B cell (primary cell): ENCODE measurements at regions of chr3 and their contacts with region 1.

Region 1: DNA sequence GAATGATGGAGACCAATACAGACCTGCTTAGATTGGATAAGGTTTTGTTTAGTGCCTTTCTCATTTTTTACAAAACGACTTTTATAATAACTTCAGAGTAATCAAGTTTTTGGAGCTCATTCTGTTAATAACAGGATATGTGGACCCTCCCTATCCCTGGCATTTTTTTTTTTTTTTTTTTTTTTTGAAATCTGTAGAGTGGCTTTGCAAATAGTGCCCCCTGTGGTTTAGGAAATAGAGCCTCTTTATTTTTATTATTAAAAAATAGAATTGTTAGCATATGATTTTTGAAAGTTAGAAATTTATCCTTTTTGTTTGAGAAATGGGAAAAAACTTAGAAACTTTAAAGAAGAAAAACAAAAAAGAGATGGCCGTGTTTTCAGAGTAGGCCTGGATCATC is 11.4 kb downstream of the SKIL start:
- DNase-seq: no peak
- ATAC-seq: no peak
- H3K4me3 ChIP-seq: no peak overlapping the region
- H3K4me3 Mint-ChIP-seq: peak overlapping the region; percentile 44
- H3K27ac ChIP-seq: no peak overlapping the region
- H3K27ac Mint-ChIP-seq: no peak overlapping the region
- H3K4me1 ChIP-seq: peaks cover 42 to 55% of the 10 kb centered on the region in 2 donors
- H3K4me1 Mint-ChIP-seq: peaks cover 63% of the 10 kb centered on the region
- H3K27me3 ChIP-seq: no peaks in the 10 kb centered on the region
- H3K27me3 Mint-ChIP-seq: no peaks in the 10 kb centered on the region
- CTCF ChIP-seq: peak; percentile 44

Region 2: GRCh38 chr3:170330366-170330765 is 38.6 kb before region 1 on chr3:
- CTCF ChIA-PET with region 1: no interaction called
- POLR2A ChIA-PET with region 1: interaction called, 10 read pairs
- intact Hi-C with region 1: no loop called
- DNase-seq: no peak
- ATAC-seq: no peak
- H3K4me3 ChIP-seq: no peak overlapping the region
- H3K4me3 Mint-ChIP-seq: no peak overlapping the region
- H3K27ac ChIP-seq: no peak overlapping the region
- H3K27ac Mint-ChIP-seq: no peak overlapping the region
- H3K4me1 ChIP-seq: peaks cover 13% of the 10 kb centered on the region in 2 donors
- H3K4me1 Mint-ChIP-seq: peaks cover 24% of the 10 kb centered on the region
- H3K27me3 ChIP-seq: no peaks in the 10 kb centered on the region
- H3K27me3 Mint-ChIP-seq: no peaks in the 10 kb centered on the region
- CTCF ChIP-seq: no peak

Region 3: GRCh38 chr3:170350515-170351413 is 18.2 kb before region 1 on chr3:
- CTCF ChIA-PET with region 1: interaction called, 4 read pairs
- POLR2A ChIA-PET with region 1: interaction called, 5 read pairs
- intact Hi-C with region 1: loop called (anchors 2 kb)
- DNase-seq: peak; percentile 49
- ATAC-seq: peak; percentile 37
- H3K4me3 ChIP-seq: peak overlapping the region in 3 of 5 experiments; percentile 25 to 42 (median 27)
- H3K4me3 Mint-ChIP-seq: peak overlapping the region; percentile 78
- H3K27ac ChIP-seq: peak overlapping the region; percentile 50 to 83
- H3K27ac Mint-ChIP-seq: peak overlapping the region; percentile 88
- H3K4me1 ChIP-seq: peaks cover 68 to 76% of the 10 kb centered on the region in 2 donors
- H3K4me1 Mint-ChIP-seq: peaks cover 75% of the 10 kb centered on the region
- H3K27me3 ChIP-seq: no peaks in the 10 kb centered on the region
- H3K27me3 Mint-ChIP-seq: no peaks in the 10 kb centered on the region
- CTCF ChIP-seq: no peak

Region 4: DNA sequence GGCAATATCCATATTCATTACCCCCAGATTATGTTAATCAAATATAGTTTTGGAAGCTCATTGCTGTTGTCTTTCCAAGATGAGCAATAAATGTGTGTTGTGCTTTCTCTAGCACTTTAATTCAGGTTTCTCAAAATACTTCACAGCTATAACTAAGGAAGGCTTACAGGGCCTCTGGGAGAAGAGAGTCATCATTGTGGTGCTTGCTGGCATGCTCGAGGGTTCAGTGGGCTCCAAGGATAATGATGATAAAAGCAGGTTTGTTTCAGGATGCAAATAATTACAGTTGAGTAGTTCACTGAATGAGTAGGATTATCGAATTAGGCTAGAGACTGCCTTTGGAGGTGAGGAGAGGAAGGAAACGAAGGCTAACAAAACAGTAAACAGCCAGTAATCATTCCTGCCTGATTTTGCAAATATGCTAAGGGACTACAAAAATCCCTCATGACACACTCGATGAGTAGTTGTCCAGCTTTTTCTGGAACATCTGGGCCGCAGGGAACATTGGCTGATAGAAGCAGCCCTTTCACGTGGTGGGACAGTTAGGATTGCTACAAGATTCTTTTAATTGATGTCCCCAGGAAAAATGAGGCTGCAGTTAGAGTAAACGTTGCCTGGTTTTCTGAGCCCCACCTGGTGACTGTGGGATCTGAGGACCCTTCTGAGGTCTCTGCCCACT is 162.9 kb after region 1 on chr3:
- CTCF ChIA-PET with region 1: no interaction called
- POLR2A ChIA-PET with region 1: no interaction called
- intact Hi-C with region 1: no loop called
- DNase-seq: no peak
- ATAC-seq: no peak
- H3K4me3 ChIP-seq: no peak overlapping the region
- H3K4me3 Mint-ChIP-seq: no peak overlapping the region
- H3K27ac ChIP-seq: no peak overlapping the region
- H3K27ac Mint-ChIP-seq: no peak overlapping the region
- H3K4me1 ChIP-seq: no peaks in the 10 kb centered on the region
- H3K4me1 Mint-ChIP-seq: no peaks in the 10 kb centered on the region
- H3K27me3 ChIP-seq: peaks cover 0 to 6% (median under 1%) of the 10 kb centered on the region in 4 experiments
- H3K27me3 Mint-ChIP-seq: peaks cover 45% of the 10 kb centered on the region
- CTCF ChIP-seq: no peak